PC-9 (cell line): ENCODE measurements at regions of chr7 and their contacts with region 1.

Region 1: DNA sequence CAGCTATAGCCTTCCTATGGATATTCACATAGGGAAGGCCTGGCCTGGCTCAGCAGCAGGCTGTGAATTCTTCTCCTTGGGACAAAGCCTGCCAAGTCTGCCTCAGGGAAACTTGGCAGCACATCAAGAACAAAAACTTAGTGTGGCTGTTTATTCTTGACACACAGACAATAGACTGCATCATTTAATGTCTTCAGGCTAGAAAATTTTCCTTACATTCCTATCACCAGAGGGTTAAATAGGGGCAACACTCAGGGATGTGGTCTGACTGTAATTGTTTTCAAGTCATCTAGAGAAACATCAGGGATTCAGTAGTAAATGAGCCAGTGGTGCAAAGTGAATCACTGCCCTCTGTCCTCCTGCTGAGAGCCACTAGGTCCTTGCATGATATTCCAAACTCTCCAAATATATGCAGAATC is 137.3 kb downstream of the SEMA3C start:
- DNase-seq: peak; percentile 65 to 81
- H3K4me3 ChIP-seq: no peak overlapping the region
- H3K27ac ChIP-seq: no peak overlapping the region
- H3K4me1 ChIP-seq: peaks cover 9% of the 10 kb centered on the region
- H3K27me3 ChIP-seq: no peaks in the 10 kb centered on the region
- CTCF ChIP-seq: no peak

Region 2: GRCh38 chr7:80681272-80681885 is 100.2 kb before region 1 on chr7:
- CTCF ChIA-PET with region 1: no interaction called
- POLR2A ChIA-PET with region 1: no interaction called
- intact Hi-C with region 1: no loop called
- DNase-seq: peak in 1 of 2 experiments; percentile 5
- H3K4me3 ChIP-seq: no peak overlapping the region
- H3K27ac ChIP-seq: no peak overlapping the region
- H3K4me1 ChIP-seq: no peaks in the 10 kb centered on the region
- H3K27me3 ChIP-seq: no peaks in the 10 kb centered on the region
- CTCF ChIP-seq: peak; percentile 72

Region 3: DNA sequence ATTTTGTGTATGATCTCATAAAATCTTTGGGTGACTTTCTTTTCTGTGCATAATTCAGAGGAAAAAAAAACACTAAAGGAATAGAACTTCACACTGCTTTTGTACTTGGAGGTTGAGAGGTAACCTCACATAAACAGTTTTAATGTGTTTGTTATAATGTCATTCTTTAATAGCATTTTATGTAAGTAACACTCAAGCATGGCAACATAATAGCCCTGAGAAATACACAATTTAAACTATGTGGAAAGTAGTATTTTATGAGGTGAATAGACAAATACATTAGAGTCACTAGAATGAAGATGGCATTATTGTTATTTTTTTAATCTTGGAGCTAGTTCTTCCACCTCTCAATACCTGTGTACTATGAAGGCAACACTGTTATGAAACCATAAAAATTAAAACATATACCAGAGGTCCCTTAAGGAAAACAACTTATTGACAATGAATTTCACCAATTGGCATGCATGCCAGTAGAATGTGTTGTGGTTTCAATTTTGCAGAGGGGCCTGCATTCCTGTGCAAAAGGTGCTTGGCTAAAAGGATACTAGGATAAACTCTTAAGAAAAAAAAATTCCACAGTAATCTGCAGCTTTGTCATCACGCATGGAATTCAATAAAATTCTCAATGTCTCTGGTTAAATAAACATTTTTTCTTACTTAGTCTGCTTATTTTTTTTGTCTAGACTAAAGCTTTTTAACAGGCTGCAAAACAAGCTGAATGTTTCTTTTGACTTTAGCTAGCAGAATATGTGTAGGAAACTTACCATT is 40.6 kb before region 1 on chr7:
- CTCF ChIA-PET with region 1: no interaction called
- POLR2A ChIA-PET with region 1: no interaction called
- intact Hi-C with region 1: loop called (anchors 2 kb)
- DNase-seq: peak in 1 of 2 experiments; percentile 52
- H3K4me3 ChIP-seq: no peak overlapping the region
- H3K27ac ChIP-seq: no peak overlapping the region
- H3K4me1 ChIP-seq: no peaks in the 10 kb centered on the region
- H3K27me3 ChIP-seq: no peaks in the 10 kb centered on the region
- CTCF ChIP-seq: no peak